ENCODE measurements at regions of chr18 and their contacts with region 1.

Region 1: DNA sequence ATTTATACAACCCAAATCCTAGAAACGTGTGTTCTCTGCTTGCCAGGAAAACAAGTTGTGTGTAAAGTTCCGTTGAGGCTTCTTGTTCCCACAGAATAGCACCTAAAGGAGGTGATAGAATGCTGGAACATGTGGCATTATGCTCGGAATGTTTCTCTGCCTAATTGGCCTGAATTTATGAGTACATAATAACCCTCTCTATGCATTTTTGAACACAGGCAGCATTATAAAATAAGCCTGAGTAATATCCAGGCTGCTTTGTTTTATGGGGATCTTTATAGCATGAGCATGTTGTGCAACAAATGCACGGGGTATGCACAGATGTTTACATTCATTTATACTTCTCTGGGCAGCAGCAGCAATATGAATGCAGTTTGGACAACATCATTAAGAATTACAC is 385.7 kb downstream of the MBD2 start:
- DNase-seq: peak; percentile 22
- ATAC-seq: peak; percentile 67
- H3K4me3 ChIP-seq: no peak overlapping the region
- H3K27ac ChIP-seq: no peak overlapping the region
- H3K4me1 ChIP-seq: peaks cover 17% of the 10 kb centered on the region
- H3K27me3 ChIP-seq: no peaks in the 10 kb centered on the region
- CTCF ChIP-seq: no peak

Region 2: GRCh38 chr18:53745224-53745967 is 93.3 kb before region 1 on chr18:
- CTCF ChIA-PET with region 1: no interaction called
- POLR2A ChIA-PET with region 1: no interaction called
- intact Hi-C with region 1: loop called (anchors 5 kb)
- DNase-seq: peak; percentile 93
- ATAC-seq: peak; percentile 91
- H3K4me3 ChIP-seq: peak overlapping the region; percentile 13; the same call in 1 of the 2 replicates
- H3K27ac ChIP-seq: peak overlapping the region; percentile 69
- H3K4me1 ChIP-seq: peaks cover 45% of the 10 kb centered on the region
- H3K27me3 ChIP-seq: no peaks in the 10 kb centered on the region
- CTCF ChIP-seq: no peak

Region 3: GRCh38 chr18:53796040-53796729 is 42.6 kb before region 1 on chr18:
- CTCF ChIA-PET with region 1: no interaction called
- POLR2A ChIA-PET with region 1: no interaction called
- intact Hi-C with region 1: loop called (anchors 5 kb)
- DNase-seq: peak; percentile 89
- ATAC-seq: peak; percentile 89
- H3K4me3 ChIP-seq: no peak overlapping the region
- H3K27ac ChIP-seq: peak overlapping the region; percentile 65
- H3K4me1 ChIP-seq: peaks cover 16% of the 10 kb centered on the region
- H3K27me3 ChIP-seq: no peaks in the 10 kb centered on the region
- CTCF ChIP-seq: no peak

Measured in PC-3 (cell line).